ENCODE measurements at regions of chr19 and their contacts with region 1.

Region 1: GRCh38 chr19:42283143-42284065 is 14.4 kb downstream of the CIC start:
- DNase-seq: peak; percentile 91
- H3K4me3 Mint-ChIP-seq: no peak overlapping the region
- H3K27ac Mint-ChIP-seq: no peak overlapping the region
- H3K4me1 Mint-ChIP-seq: peaks cover 39% of the 10 kb centered on the region
- H3K27me3 Mint-ChIP-seq: no peaks in the 10 kb centered on the region

Region 2: GRCh38 chr19:42057846-42058245 is 225.6 kb before region 1 on chr19:
- intact Hi-C with region 1: no loop called
- DNase-seq: no peak
- H3K4me3 Mint-ChIP-seq: no peak overlapping the region
- H3K27ac Mint-ChIP-seq: no peak overlapping the region
- H3K4me1 Mint-ChIP-seq: no peaks in the 10 kb centered on the region
- H3K27me3 Mint-ChIP-seq: no peaks in the 10 kb centered on the region

Region 3: GRCh38 chr19:42108527-42109389 is 174.6 kb before region 1 on chr19:
- intact Hi-C with region 1: no loop called
- DNase-seq: peak; percentile 82
- H3K4me3 Mint-ChIP-seq: no peak overlapping the region
- H3K27ac Mint-ChIP-seq: peak overlapping the region; percentile 8
- H3K4me1 Mint-ChIP-seq: peaks cover 35% of the 10 kb centered on the region
- H3K27me3 Mint-ChIP-seq: no peaks in the 10 kb centered on the region

Region 4: DNA sequence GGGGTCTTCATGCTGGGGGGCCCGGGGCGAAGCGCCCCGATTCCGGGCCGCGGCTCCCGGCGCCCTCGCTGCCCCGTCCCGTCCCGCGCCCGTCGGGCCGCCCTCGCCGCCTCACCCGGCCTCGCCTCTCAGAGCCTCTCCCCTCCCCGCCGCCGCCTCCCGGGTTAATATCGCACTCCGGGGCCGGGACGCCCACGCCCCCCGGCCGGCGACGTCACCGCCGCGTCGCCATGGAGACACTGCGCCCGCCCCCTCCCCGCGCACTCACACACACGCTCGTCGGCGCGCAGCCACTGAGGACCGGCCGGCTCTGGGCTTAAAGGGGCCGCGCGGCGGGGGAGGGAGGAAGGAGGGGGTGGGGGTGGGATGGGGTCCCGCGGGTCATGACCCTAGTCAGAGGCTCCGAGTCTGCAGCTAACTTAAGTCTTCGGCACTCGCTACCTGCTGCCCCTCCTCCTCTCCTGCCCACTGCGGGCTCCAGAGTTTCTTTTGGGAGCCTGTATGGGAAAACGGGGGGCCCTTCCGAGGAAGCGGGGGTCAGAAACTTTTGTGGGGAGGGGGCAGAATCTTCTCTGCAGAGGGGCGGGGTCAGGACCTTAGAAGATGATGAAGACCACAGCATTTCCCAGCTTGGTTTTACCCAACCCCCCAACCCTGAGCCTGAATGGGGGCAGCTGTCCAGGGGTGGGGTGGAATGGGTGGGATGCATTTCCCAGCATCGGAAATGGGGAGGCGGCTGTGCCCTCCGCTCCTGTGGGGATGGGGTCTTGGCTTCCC is 28.2 kb before region 1 on chr19 and contains the start of gene ERF:
- intact Hi-C with region 1: loop called (anchors 1 kb)
- DNase-seq: peak; percentile 91
- H3K4me3 Mint-ChIP-seq: peak within 1 kb of the TSS; percentile 74
- H3K27ac Mint-ChIP-seq: peak within 1 kb of the TSS; percentile 62
- H3K4me1 Mint-ChIP-seq: peaks cover 18% of the 10 kb centered on the region
- H3K27me3 Mint-ChIP-seq: peaks cover 7% of the 10 kb centered on the region
- total RNA-seq, gene ERF: 58.4 and 59.1 TPM in 2 replicates

Region 5: DNA sequence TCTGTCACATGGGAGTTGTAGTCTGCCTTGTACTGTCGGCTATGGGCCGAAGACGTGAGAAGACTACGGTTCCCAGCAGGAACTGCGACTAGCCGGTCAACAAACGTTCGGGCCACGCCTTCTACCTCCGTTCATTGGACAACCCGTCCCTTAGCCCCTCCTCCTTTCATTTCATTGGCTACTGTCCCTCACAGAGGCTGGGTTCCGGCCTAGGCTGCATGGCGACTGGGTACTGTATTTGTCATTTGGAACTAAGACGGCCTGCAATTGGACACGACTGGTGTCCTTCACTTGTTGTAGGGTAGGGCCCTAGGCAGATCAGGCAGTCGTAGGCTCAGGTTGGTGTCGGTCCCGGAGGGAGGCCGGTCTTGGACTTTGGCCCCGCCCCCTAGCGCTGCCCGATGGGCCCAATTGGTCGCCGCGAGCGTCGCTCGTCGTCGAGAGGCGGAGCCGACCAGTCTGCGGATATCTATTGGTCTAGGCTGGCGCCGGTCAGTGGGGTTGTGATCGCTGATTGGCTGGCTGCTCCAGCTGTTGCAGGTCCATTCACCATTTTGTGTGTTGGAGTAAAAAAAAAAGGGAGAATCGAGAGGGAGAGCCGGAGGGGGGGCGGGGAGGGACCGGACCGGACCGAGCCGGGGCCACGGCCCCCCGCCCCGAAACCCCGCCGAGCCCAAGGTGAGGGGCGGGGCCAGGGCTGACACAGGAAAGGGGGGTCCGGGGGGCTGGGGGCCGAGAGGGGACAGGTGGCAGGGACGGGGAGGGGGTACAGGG is 14.5 kb before region 1 on chr19 and contains the start of gene CIC:
- intact Hi-C with region 1: loop called (anchors 1 kb)
- DNase-seq: peak; percentile 99
- H3K4me3 Mint-ChIP-seq: no peak within 1 kb of the TSS
- H3K27ac Mint-ChIP-seq: peak within 1 kb of the TSS; percentile 99
- H3K4me1 Mint-ChIP-seq: peaks cover 25% of the 10 kb centered on the region
- H3K27me3 Mint-ChIP-seq: no peaks in the 10 kb centered on the region
- total RNA-seq, gene CIC: 68.3 and 69.3 TPM in 2 replicates

Region 6: DNA sequence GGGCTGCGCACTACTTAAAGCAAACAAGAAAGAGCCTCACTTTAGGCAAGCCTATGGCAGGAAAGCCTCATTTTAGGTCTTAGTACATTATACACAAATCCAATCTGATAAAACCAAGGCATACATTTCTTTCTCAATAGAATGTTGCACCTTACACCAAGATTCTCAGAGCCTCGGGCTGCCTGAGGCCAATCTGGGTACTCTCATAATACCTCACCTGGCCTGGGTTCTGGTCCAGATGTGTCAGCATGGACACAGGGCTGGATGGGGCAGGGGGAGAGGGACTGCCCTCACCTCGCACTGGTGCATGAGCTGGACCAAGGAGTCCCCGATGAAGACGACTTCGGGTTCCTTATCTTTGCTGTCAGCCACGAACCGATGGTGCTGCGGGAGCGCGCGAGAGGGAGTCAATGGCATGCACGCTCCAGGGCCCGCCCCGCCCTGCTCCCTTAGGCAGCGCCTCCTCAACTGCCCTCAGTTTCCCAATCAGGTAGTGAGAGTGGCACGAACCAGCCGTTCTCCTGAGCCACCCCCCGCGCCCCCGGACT is 18.3 kb after region 1 on chr19 and contains the start of gene PRR19:
- intact Hi-C with region 1: loop called (anchors 2 kb)
- DNase-seq: no peak
- H3K4me3 Mint-ChIP-seq: peak within 1 kb of the TSS; percentile 88
- H3K27ac Mint-ChIP-seq: peak within 1 kb of the TSS; percentile 92
- H3K4me1 Mint-ChIP-seq: peaks cover 22% of the 10 kb centered on the region
- H3K27me3 Mint-ChIP-seq: no peaks in the 10 kb centered on the region
- total RNA-seq, gene PRR19: 0.74 and 0.91 TPM in 2 replicates

Region 7: GRCh38 chr19:42325273-42325895 is 42.0 kb after region 1 on chr19 and contains the start of gene MEGF8:
- intact Hi-C with region 1: loop called (anchors 2 kb)
- DNase-seq: peak; percentile 98
- H3K4me3 Mint-ChIP-seq: peak within 1 kb of the TSS; percentile 87
- H3K27ac Mint-ChIP-seq: peak within 1 kb of the TSS; percentile 73
- H3K4me1 Mint-ChIP-seq: peaks cover 12% of the 10 kb centered on the region
- H3K27me3 Mint-ChIP-seq: peaks cover 25% of the 10 kb centered on the region
- total RNA-seq, gene MEGF8: 9.7 and 10.3 TPM in 2 replicates

Measured in activated T-helper 2 cell treated with anti-CD3 and anti-CD28 coated beads, Interferon-gamma antibody, Interleukin-2, Interleukin-4, amounts not matched to agents 10 μg/mL and 5 μg/mL and 100 μg/mL, durations not matched to agents 14 hours and 24 hours and 36 hours (primary cell).